ENCODE measurements at regions of chr17 and their contacts with region 1.

Region 1: GRCh38 chr17:40559954-40560591 is 5.2 kb downstream of the CCR7 start:
- H3K4me3 ChIP-seq: no peak overlapping the region
- H3K27ac ChIP-seq: no peak overlapping the region
- H3K4me1 ChIP-seq: no peaks in the 10 kb centered on the region
- CTCF ChIP-seq: peak; percentile 97

Region 2: DNA sequence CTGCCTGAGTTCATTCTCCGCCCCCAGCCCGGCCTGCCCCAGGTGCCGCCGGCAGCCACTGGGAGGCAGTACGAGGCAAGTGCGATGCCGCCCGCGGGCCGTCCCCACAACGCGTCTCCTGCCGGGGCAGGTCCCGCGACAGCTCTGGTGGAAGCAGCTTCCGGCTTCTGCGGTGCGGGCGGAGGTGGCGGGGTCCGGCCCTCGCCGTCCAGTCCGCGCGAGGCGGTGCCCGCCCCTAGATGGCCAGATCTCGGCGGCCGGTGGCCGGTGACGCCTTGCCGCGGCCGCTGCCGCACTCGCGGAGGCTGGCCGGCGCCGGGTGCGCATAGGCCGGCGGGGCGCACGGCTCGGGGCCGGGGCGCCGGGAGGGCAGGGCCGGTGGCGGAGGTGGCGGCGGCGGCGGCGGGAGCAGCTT is 197.4 kb before region 1 on chr17:
- CTCF ChIA-PET with region 1: interaction called, 50 read pairs
- POLR2A ChIA-PET with region 1: interaction called, 6 read pairs
- H3K4me3 ChIP-seq: peak overlapping the region; percentile 50
- H3K27ac ChIP-seq: peak overlapping the region; percentile 70; the same call in 1 of the 2 replicates
- H3K4me1 ChIP-seq: no peaks in the 10 kb centered on the region
- CTCF ChIP-seq: peak; percentile 97

Region 3: DNA sequence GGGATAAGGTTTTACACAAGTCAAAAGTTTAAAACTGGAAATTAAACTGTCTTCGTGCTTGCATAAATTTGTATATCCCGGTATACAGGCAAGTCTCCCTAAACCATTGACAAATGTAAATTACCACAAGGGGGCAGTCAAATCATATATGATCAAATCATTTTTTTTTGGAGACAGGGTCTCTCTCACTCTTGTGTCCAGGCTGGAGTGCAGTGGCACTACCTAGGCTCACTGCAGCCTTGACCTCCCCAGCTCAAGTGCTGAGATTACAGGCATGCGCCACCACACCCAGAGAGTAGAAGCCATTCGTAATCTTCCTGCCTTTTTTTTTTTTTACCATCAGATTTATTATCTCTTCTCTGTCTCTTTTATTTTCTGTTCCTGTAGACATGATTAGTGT is 160.9 kb before region 1 on chr17:
- CTCF ChIA-PET with region 1: interaction called, 16 read pairs
- POLR2A ChIA-PET with region 1: interaction called, 3 read pairs
- H3K4me3 ChIP-seq: no peak overlapping the region
- H3K27ac ChIP-seq: no peak overlapping the region
- H3K4me1 ChIP-seq: no peaks in the 10 kb centered on the region
- CTCF ChIP-seq: no peak

Region 4: DNA sequence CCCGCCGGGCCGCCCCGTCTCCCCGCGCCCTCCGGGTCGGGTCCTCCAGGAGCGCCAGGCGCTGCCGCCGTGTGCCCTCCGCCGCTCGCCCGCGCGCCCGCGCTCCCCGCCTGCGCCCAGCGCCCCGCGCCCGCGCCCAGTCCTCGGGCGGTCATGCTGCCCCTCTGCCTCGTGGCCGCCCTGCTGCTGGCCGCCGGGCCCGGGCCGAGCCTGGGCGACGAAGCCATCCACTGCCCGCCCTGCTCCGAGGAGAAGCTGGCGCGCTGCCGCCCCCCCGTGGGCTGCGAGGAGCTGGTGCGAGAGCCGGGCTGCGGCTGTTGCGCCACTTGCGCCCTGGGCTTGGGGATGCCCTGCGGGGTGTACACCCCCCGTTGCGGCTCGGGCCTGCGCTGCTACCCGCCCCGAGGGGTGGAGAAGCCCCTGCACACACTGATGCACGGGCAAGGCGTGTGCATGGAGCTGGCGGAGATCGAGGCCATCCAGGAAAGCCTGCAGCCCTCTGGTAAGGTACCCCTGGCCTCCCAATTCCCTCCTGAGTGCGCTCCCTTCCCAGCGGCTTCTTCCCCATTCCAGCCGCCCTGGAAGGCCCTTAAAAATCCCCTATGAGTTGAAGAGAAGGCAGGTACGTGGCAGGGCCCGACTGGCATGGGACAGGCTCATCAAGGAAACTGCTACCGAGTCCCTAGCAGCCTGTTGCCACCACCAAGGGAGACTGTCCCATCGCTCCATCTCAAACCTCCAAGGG is 116.3 kb before region 1 on chr17:
- CTCF ChIA-PET with region 1: interaction called, 11 read pairs
- POLR2A ChIA-PET with region 1: no interaction called
- H3K4me3 ChIP-seq: peak overlapping the region; percentile 16
- H3K27ac ChIP-seq: peak overlapping the region; percentile 46; the same call in 1 of the 2 replicates
- H3K4me1 ChIP-seq: no peaks in the 10 kb centered on the region; the same call in 1 of the 2 replicates
- CTCF ChIP-seq: peak; percentile 76

Region 5: GRCh38 chr17:40536295-40537171 is 23.5 kb before region 1 on chr17:
- CTCF ChIA-PET with region 1: interaction called, 140 read pairs
- POLR2A ChIA-PET with region 1: no interaction called
- H3K4me3 ChIP-seq: no peak overlapping the region
- H3K27ac ChIP-seq: no peak overlapping the region
- H3K4me1 ChIP-seq: no peaks in the 10 kb centered on the region
- CTCF ChIP-seq: no peak